Dendritic cell treated with granulocyte-macrophage colony-stimulating factor and Interleukin-4, amounts not matched to agents 40 ng/mL and 50 ng/mL, for 4 days (primary cell): ENCODE measurements at regions of chr11 and their contacts with region 1.

Region 1: DNA sequence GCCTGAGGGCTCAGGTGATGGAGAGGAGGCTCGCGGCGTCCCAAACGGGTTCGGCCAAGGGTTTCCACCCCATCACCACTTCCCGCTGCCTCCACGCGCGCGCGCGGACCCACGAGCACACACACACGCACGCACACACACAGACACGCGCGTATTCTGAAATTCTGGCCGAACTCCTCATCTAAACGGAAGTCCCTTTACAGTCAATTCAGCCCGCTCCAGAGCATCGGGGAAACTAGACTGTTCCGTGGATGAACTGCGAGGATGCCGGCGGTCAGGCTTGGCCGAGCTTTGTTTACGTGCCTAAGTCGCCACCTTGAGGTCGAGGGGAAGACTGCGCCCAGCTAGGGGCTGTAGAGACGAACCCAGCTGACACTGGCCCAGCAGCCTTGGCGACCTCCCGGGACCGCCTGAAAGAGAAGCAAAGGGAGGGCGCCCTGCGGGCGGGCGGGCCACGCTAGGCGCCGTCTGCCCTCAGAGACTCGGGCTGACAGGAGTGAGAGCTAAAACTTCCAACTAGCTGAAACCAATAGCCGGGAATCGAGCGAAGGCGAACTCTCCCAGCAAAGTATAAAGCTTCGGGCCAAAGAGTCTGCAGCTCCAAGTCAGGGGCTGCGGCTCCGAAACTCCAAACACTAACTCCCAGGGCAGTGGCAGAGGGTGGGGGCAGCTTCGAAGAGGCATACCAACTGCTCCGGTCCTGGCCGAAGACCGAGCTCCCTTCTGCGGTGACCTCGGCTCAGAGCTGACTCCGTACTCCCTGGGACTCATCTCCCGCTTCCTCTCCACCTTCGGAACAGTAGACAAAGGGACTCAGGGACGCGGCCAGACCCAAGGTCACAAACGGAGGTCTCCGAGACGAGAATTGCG is 124.7 kb upstream of the C11orf58 start:
- H3K4me3 Mint-ChIP-seq: peak overlapping the region; percentile 69
- H3K27ac Mint-ChIP-seq: no peak overlapping the region
- H3K4me1 Mint-ChIP-seq: peaks cover 20% of the 10 kb centered on the region
- H3K27me3 Mint-ChIP-seq: peaks cover 40% of the 10 kb centered on the region

Region 2: GRCh38 chr11:15327786-15328231 is 1285.9 kb before region 1 on chr11:
- intact Hi-C with region 1: loop called (anchors 2 kb)
- H3K4me3 Mint-ChIP-seq: no peak overlapping the region
- H3K27ac Mint-ChIP-seq: no peak overlapping the region
- H3K4me1 Mint-ChIP-seq: no peaks in the 10 kb centered on the region
- H3K27me3 Mint-ChIP-seq: no peaks in the 10 kb centered on the region

Region 3: GRCh38 chr11:15629690-15630321 is 983.9 kb before region 1 on chr11:
- intact Hi-C with region 1: loop called (anchors 2 kb)
- H3K4me3 Mint-ChIP-seq: no peak overlapping the region
- H3K27ac Mint-ChIP-seq: no peak overlapping the region
- H3K4me1 Mint-ChIP-seq: no peaks in the 10 kb centered on the region
- H3K27me3 Mint-ChIP-seq: peaks cover 21% of the 10 kb centered on the region

Region 4: DNA sequence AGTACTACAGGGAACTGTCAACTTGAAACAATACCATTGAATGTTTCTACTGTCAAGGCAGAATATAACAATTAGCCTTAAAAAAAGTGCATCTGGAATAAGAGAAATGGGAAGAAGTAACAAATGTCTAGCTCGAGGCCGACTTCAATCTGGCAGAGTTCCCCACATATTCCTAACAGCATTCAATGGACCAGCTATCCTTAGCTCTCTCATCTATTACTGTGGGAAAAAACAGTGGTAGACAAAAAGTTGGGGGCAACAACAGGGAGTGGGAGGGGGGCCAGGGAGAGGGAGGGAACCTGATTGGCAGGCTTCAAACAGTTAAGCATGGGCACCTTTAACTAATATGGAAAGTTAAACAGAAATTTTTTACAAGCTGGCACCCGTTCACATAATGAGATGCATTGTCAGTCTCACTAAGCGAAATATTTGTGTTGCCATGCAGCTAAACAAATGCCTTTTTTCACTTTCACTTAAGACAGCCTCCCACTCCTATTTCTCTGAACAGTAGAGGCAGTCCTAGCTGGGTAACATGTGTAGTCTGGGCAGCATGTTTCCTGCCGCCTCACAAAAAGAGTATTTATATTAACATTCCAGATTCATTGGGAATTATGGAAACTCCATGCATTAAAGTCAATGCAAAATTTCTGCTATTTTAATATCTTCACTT is 195.2 kb before region 1 on chr11:
- intact Hi-C with region 1: no loop called
- H3K4me3 Mint-ChIP-seq: no peak overlapping the region
- H3K27ac Mint-ChIP-seq: no peak overlapping the region
- H3K4me1 Mint-ChIP-seq: no peaks in the 10 kb centered on the region
- H3K27me3 Mint-ChIP-seq: no peaks in the 10 kb centered on the region

Region 5: DNA sequence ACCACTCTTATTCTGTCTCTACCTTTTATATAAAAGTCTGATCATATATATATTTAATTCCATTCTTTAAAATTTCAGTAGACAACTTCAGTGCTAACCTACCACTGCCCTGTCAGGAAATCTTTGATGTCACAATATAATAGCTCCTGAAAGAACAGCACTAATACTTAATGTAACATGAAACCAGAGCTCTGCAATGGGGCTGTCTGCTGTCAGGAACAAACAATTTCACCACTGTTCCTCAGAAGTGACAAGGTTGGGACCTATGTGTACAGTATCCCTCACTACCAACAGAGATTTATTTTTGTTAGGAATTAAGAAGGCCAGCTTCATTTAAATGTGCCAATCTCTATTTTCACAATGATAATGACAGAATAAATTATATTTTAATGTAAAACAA is 40.8 kb before region 1 on chr11:
- intact Hi-C with region 1: no loop called
- H3K4me3 Mint-ChIP-seq: no peak overlapping the region
- H3K27ac Mint-ChIP-seq: no peak overlapping the region
- H3K4me1 Mint-ChIP-seq: no peaks in the 10 kb centered on the region
- H3K27me3 Mint-ChIP-seq: no peaks in the 10 kb centered on the region

Region 6: GRCh38 chr11:16843294-16843693 is 229.5 kb after region 1 on chr11:
- intact Hi-C with region 1: no loop called
- H3K4me3 Mint-ChIP-seq: no peak overlapping the region
- H3K27ac Mint-ChIP-seq: no peak overlapping the region
- H3K4me1 Mint-ChIP-seq: no peaks in the 10 kb centered on the region
- H3K27me3 Mint-ChIP-seq: no peaks in the 10 kb centered on the region